H1 (cell line): ENCODE measurements at regions of chr3 and their contacts with region 1.

Region 1: DNA sequence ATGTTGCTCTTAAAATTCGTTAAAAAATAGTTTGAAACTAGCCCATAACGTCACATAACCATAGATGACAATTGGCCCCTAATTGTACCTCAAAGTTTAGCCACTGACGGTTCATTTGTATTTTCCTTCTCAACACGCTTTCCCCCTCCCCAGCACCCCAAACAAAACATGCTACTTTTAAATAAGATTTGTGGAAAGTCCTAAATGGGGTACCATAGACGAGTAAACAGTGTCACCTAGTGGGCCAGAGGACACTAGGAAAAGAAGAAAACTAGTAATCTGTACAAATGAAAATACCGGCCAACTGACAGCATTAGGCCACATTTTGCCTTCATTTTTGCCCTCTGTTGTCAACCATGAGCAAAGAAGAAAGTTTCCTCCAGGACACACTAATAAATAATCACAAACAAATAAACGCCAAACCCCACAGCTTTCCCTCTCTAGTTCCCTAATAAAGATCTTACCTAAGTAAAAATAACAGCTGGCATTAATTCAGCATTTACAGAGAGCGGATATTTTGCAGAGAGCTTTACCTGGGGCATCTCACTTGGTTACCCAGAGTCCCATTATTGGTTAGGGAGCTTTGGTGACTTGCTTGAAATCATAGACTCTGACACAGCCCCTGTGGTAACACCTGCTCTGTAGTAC is 175.1 kb upstream of the ATP11B start:
- DNase-seq: no peak
- H3K4me3 ChIP-seq: no peak overlapping the region
- H3K27ac ChIP-seq: no peak overlapping the region
- H3K4me1 ChIP-seq: peaks cover 0 to 3% (median 3%) of the 10 kb centered on the region in 4 experiments; a peak in 3 of 7 replicates
- H3K27me3 ChIP-seq: no peaks in the 10 kb centered on the region
- CTCF ChIP-seq: peak in 2 of 3 experiments; percentile 62 to 76; a peak in 3 of 4 replicates
- EP300 ChIP-seq: no peak
- POLR2A ChIP-seq: no peak
- RAD21 ChIP-seq: peak; percentile 96

Region 2: DNA sequence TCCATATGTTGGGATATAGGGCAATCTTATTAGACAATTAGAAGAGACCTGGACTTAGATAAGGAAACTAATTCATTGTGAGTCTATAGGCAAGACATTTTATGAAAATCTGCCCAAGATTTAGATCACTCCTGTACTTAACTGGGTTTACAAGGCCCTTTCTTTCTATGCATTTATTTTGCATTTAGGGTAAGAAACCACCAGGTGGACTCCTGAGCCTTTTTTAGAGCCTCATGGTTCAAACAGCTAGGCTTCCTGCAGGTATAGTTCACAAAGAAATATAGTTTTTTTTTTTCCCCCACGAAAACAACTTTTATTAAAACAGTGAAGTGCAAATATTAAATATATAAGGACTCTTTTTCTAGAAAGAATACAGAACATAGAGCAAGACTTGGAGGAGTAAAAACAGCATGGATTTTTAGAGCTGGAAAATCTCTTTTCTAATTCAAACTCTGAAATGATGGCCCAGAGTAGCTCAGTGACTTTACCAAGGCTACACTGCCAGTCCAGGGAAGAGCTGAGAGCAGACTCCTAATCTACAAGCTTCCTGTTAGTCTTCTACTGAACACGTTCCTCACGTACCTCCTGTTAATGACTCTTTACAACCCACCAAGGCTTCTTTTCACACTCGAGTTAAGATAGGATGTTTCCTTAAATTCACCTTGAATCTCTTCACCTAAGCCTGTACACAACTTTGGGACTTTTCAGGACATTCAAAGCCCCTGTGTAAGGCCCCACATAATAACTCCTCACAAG is 225.8 kb before region 1 on chr3:
- CTCF ChIA-PET with region 1: interaction called, 12 read pairs
- POLR2A ChIA-PET with region 1: no interaction called
- DNase-seq: no peak
- H3K4me3 ChIP-seq: no peak overlapping the region; a peak in 1 of 8 replicates
- H3K27ac ChIP-seq: no peak overlapping the region
- H3K4me1 ChIP-seq: peaks cover 0 to 5% (median under 1%) of the 10 kb centered on the region in 4 experiments; a peak in 1 of 7 replicates
- H3K27me3 ChIP-seq: peaks cover 0 to 1% (median 0%) of the 10 kb centered on the region in 4 experiments; a peak in 2 of 7 replicates
- CTCF ChIP-seq: peak in 2 of 3 experiments; percentile 46 to 50; a peak in 3 of 4 replicates
- EP300 ChIP-seq: no peak
- POLR2A ChIP-seq: no peak
- RAD21 ChIP-seq: peak; percentile 72 to 83

Region 3: GRCh38 chr3:182683453-182683852 is 65.2 kb after region 1 on chr3:
- CTCF ChIA-PET with region 1: interaction called, 14 read pairs
- POLR2A ChIA-PET with region 1: no interaction called
- DNase-seq: peak in 1 of 2 experiments; percentile 80
- H3K4me3 ChIP-seq: peak overlapping the region in 1 of 4 experiments; percentile 76; a peak in 2 of 8 replicates
- H3K27ac ChIP-seq: no peak overlapping the region
- H3K4me1 ChIP-seq: 0 out of 7 replicates have a peak, but pooled peaks cover 0 to 6% (median 0%) of the 10 kb centered on the region in 4 experiments
- H3K27me3 ChIP-seq: no peaks in the 10 kb centered on the region; a peak in 1 of 7 replicates
- CTCF ChIP-seq: peak; percentile 48 to 84 (median 71)
- EP300 ChIP-seq: no peak
- POLR2A ChIP-seq: no peak
- RAD21 ChIP-seq: peak; percentile 96 to 97